Ascending aorta (tissue), 2 donors: ENCODE measurements at regions of chr18 and their contacts with region 1.

Region 1: DNA sequence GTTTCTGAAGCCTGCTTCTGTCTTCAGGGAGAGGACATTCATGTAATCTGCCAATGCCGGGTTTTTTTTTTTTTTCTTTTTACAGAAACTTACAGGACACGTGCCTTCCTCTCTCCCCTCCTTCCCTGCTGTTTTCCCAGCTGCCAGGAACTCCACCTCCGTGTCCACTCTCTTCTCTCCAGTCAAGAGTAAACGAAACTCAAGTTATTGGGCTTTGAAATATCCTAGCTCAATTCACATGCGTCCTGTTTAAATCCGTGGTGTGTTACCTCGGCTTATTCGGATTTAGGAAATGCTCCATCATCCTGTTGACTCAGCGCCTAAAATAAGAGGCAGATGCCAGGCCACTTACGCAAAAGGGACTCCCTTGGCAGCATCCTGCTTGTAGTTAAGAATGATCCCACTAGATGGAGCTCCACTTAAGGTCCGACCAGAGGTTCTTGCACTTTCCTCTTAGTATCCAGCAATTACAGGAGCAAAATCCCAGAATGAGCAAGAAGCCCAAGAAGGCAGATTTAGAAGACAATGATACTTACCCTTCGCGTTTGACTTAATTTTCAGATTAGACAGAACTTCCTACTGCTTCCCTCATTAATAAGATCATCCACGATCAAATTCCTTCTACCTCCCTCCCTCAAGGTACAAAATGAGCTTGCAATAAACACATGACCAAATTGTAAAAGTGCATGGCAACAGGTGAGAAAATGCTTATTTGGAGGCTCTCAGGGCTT is 97.2 kb upstream of the ZCCHC2 start:
- DNase-seq: peak; percentile 60 to 96
- H3K4me3 ChIP-seq: peak overlapping the region; percentile 36 to 57
- H3K27ac ChIP-seq: peak overlapping the region; percentile 82 to 92
- H3K4me1 ChIP-seq: peaks cover 0 to 12% of the 10 kb centered on the region in 2 donors
- H3K27me3 ChIP-seq: no peaks in the 10 kb centered on the region
- CTCF ChIP-seq: peak; percentile 81 to 87 (median 82)

Region 2: GRCh38 chr18:62165583-62165982 is 260.0 kb before region 1 on chr18:
- intact Hi-C with region 1: no loop called
- DNase-seq: no peak
- H3K4me3 ChIP-seq: no peak overlapping the region
- H3K27ac ChIP-seq: no peak overlapping the region
- H3K4me1 ChIP-seq: no peaks in the 10 kb centered on the region
- H3K27me3 ChIP-seq: no peaks in the 10 kb centered on the region
- CTCF ChIP-seq: no peak

Region 3: GRCh38 chr18:62186774-62187542 is 238.7 kb before region 1 on chr18 and contains the starts of genes PIGN and RELCH:
- intact Hi-C with region 1: loop called (anchors 5 kb)
- DNase-seq: peak; percentile 96 to 99
- H3K4me3 ChIP-seq: peak within 1 kb of the TSS; percentile 79 to 98
- H3K27ac ChIP-seq: peak within 1 kb of the TSS; percentile 75 to 82
- H3K4me1 ChIP-seq: peaks cover 0 to 28% of the 10 kb centered on the region in 2 donors
- H3K27me3 ChIP-seq: no peaks in the 10 kb centered on the region
- CTCF ChIP-seq: no peak
- total RNA-seq, gene PIGN: 12.8 TPM
- total RNA-seq, gene RELCH: 26.4 TPM

Region 4: DNA sequence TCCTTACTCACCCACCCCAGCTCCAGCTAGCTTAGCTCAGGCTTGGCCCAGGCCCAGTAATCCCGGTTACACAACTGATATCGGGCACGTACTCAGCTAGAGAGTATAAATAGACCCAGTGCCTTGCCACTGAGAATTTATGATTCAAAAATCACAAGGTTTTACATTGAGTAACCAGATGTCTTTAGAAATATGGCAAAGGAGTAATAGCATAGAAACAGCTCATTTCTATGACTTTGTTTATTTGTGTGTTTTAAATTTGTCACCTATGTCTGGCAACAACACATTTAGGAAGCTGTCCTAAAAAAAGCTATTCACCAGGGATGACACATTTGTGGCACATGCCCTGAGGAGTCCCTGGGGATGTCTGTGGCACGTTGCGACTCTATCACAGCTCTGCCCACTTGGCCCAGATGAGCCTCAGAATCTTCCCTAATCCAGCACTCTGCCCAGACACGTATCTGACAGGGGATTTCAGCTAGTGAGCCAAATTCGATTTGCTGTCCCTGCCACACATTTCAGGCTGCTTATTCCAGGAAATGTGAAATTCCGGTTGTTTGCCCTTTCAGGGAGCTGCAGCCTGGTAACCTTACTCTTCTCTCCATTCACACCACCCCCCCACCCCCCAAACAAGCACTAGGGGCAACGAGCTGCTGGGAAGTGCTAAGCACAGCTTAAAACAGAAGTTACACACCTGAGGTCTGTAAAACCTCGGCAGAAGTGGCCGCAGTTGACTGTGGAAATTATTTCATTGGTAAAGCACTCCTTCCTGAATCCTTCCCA is 11.8 kb after region 1 on chr18:
- intact Hi-C with region 1: loop called (anchors 1 kb)
- DNase-seq: peak; percentile 86 to 98
- H3K4me3 ChIP-seq: peak overlapping the region; percentile 39 to 52
- H3K27ac ChIP-seq: peak overlapping the region; percentile 85 to 94
- H3K4me1 ChIP-seq: peaks cover 4 to 19% of the 10 kb centered on the region in 2 donors
- H3K27me3 ChIP-seq: no peaks in the 10 kb centered on the region
- CTCF ChIP-seq: no peak

Region 5: GRCh38 chr18:62450546-62451406 is 25.1 kb after region 1 on chr18:
- intact Hi-C with region 1: loop called (anchors 1 kb)
- DNase-seq: peak; percentile 74 to 92
- H3K4me3 ChIP-seq: peak overlapping the region in 1 of 2 donors; percentile 1
- H3K27ac ChIP-seq: peak overlapping the region; percentile 28 to 62
- H3K4me1 ChIP-seq: peaks cover 0 to 10% of the 10 kb centered on the region in 2 donors
- H3K27me3 ChIP-seq: no peaks in the 10 kb centered on the region
- CTCF ChIP-seq: no peak

Region 6: GRCh38 chr18:62584241-62585120 is 158.9 kb after region 1 on chr18:
- intact Hi-C with region 1: loop called (anchors 1 kb)
- DNase-seq: peak; percentile 51 to 90
- H3K4me3 ChIP-seq: peak overlapping the region in 1 of 2 donors; percentile 42
- H3K27ac ChIP-seq: peak overlapping the region in 1 of 2 donors; percentile 59
- H3K4me1 ChIP-seq: peaks cover 0 to 4% of the 10 kb centered on the region in 2 donors
- H3K27me3 ChIP-seq: no peaks in the 10 kb centered on the region
- CTCF ChIP-seq: peak; percentile 92 to 95 (median 93)

Region 7: DNA sequence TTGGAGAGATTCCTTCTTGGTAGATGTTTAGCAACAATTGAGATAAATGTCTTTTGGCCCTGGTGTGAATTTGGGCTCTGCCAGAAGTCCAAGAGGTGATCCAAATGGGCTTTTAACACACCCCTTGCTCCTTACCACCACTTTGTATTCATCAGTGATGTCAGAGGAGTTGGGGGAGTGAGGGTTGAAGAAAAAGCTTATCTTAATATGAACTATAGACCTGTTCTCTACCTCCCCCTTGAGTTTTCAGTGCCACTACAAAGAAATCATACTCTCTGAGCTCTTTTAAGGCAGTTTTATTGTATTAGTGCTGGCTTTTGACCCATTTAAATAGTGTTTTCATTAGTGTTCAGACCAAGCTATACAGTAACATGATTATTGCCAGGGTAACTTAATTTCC is 518.8 kb after region 1 on chr18:
- intact Hi-C with region 1: loop called (anchors 5 kb)
- DNase-seq: no peak
- H3K4me3 ChIP-seq: no peak overlapping the region
- H3K27ac ChIP-seq: no peak overlapping the region
- H3K4me1 ChIP-seq: peaks cover 0 to 5% of the 10 kb centered on the region in 2 donors
- H3K27me3 ChIP-seq: no peaks in the 10 kb centered on the region
- CTCF ChIP-seq: no peak

Region 8: GRCh38 chr18:62982600-62983251 is 557.1 kb after region 1 on chr18:
- intact Hi-C with region 1: loop called (anchors 5 kb)
- DNase-seq: no peak
- H3K4me3 ChIP-seq: peak overlapping the region in 1 of 2 donors; percentile 57
- H3K27ac ChIP-seq: no peak overlapping the region
- H3K4me1 ChIP-seq: no peaks in the 10 kb centered on the region
- H3K27me3 ChIP-seq: no peaks in the 10 kb centered on the region
- CTCF ChIP-seq: peak; percentile 65 to 78 (median 68)